HEK293T (cell line): ENCODE measurements at regions of chr1 and their contacts with region 1.

Region 1: GRCh38 chr1:203871107-203871875 is 9.9 kb downstream of the SNRPE start:
- DNase-seq: peak; percentile 81

Region 2: GRCh38 chr1:203843435-203843834 is 27.9 kb before region 1 on chr1:
- CTCF ChIA-PET with region 1: no interaction called
- POLR2A ChIA-PET with region 1: no interaction called
- DNase-seq: no peak

Region 3: DNA sequence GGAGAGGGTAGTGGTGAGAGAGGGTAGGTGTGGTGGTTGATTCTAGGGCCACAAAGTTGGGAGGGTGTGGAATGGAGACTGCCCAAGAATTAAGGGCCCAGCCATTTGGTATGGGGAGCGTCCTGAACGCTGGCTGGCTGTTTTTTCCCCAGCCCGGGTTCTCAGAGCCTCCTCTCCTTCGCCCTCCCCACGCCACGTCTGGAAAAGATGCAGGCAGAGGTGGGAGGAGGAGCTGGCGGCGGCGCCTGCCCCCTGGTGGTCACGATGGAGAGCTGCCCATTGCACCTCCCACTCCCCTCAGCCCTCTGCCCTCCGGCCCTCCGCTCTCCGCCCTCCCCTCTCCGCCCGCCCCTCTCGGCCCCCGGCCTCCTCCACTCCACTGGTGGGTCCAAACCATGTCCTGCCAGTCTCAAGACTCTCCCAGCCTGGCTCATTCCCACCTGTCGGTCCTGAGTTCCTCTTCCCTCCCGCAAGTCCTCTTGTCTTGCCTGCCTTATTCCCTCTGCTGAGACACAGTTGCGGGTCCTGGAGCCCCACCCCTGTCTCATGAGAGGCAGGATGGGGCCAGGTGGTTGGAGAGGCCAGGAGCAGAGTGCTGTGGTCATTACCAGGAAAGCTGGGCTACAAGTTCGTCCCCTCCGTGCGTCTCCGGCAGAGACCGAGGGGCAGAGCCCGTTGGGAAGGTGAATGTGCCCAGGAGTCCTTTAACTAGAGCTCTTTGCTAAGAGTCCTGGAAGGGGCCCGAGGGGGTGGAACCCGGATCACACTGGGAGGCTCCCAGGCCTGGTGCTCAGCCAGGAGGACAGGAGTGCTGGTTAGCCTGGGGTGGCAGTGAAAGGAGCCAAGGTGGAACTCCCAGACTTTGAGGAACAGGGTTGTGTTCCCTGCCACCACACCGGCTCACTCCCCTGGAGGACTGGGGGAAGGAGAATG is 257.9 kb after region 1 on chr1:
- CTCF ChIA-PET with region 1: interaction called, 27 read pairs
- POLR2A ChIA-PET with region 1: interaction called, 5 read pairs
- DNase-seq: peak; percentile 95